ENCODE measurements at regions of chr9 and their contacts with region 1.

Region 1: DNA sequence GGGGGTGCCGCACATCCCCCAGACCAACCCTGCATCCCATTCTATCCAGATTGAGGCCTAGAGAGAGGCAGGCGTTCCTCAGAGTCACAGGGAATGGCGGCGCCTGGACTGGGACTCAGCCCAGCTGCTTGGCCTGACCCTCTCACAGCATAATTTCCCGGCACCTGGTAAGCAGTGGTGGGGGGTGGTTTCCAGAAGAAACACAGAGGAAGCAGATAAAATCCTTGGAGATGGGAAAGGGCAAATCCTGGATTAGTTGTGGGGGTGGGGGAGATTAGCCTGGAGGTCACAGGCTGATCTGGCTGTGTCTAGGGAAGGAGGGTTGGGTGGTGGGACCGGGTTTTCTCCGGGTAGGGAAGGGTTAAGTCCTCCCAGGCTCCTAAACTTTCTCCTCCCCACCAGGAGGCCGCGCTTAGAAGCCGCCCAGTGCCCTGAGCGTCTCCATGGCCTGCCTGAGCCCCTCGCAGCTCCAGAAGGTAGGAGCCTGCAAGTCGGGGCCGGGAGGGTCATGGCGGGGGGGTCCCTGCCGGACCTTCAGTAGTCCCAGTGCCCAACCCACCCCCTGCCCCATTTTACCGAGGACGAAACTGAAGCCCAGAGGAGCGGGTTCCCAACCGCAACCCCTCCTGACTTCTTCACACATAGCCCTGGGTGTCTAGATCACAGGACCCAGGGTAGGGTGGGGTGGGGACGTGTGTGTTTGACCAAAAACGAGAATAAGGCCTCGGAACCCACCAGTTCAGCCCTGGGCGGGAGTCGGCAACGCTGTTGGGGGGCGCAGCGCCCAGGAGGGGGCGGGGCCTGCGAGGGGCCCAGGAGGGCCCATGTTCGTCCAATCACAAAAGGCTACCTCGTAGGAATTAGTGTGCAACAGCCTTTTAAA is 1.3 kb downstream of the PHYHD1 start:
- DNase-seq: peak; percentile 72 to 79
- H3K4me3 ChIP-seq: peak overlapping the region; percentile 52 to 97
- H3K27ac ChIP-seq: peak overlapping the region; percentile 91 to 95
- H3K4me1 ChIP-seq: peaks cover 7 to 12% of the 10 kb centered on the region in 2 donors
- H3K27me3 ChIP-seq: no peaks in the 10 kb centered on the region
- CTCF ChIP-seq: peak in 2 of 4 experiments; percentile 6 to 25
- POLR2A ChIP-seq: peak in 1 of 2 donors; percentile 18

Region 2: DNA sequence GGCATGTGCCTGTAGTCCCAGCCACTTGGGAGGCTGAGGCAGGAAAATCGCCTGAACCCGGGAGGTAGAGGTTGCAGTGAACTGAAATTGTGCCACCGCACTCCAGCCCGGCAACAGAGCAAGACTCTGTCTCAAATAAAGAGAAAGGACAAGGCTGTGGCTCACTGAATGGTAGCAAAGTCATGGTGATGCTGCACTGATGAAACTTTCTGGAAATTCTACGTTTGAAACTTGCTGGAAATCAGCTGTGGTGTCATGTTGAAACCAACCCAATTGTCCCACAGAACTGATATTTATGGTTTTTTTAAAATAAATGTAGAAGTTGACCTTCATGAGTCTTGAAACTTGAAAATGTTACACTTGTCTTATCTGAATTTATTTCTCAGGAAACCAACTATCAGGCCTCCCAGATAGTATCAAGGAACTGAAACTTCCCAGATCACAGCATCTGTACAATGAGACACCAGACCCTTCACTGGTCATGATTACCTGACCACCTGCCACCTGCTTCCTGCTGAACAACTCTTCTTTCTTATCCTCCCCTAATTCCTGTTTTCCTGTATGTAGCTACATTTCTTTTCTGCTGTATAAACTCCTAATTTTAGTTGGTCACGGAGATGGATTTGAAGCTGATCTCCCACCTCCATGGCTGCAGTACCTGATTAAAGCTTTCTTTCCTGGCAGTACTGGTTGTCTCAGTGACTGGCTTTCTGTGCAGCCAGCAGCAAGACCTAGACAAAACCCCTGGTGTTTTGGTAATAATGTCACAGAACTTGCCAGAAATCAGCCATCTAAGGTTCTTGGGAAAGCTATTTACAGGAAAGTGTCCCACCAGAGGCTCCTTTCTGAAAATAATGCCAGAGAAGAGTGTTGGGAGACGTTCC is 140.7 kb before region 1 on chr9:
- intact Hi-C with region 1: no loop called
- DNase-seq: no peak
- H3K4me3 ChIP-seq: no peak overlapping the region
- H3K27ac ChIP-seq: no peak overlapping the region
- H3K4me1 ChIP-seq: no peaks in the 10 kb centered on the region
- H3K27me3 ChIP-seq: no peaks in the 10 kb centered on the region
- CTCF ChIP-seq: no peak
- POLR2A ChIP-seq: no peak

Region 3: DNA sequence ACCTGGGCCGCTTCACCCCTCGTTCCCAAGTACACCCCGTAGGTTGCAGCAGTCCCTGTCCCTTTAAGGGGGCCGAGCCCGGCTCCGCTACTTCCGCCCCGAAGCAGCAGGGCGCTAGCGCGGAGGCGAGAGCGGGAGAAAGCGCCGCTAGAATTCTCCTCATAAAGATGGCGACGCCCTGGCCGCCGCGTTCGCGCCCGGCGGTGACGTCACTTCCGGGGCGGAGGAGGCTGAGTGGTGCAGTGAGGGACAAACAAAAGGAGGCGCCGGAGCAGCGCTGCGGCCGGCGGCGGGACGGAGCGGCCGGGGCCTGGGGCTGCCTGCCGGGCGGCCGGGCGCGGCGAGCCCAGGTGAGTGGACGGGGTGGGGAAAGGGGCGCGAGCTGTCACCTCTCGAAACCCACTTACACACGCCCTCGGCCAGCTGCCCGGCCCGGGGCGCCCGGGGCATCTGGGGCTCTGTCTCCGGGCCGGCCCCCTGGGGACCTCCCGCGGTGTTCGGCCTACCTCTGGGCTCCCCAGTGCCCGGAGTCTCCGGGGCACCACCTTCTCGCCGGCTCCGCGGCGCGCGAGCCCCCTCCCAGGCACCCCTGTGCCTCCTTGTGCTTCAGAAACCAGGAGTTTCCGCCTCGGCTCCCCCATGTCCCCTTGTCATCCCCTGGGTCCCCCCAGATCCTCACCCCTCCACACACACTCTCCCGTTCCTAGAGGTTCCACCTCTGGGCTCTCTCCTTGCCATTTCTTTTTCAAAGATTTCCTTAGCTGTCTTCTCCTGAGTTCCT is 40.0 kb before region 1 on chr9 and contains the starts of genes KYAT1 and LRRC8A:
- intact Hi-C with region 1: loop called (anchors 5 kb)
- DNase-seq: peak; percentile 96 to 98
- H3K4me3 ChIP-seq: peak within 1 kb of the TSS; percentile 73 to 83
- H3K27ac ChIP-seq: peak within 1 kb of the TSS; percentile 96 to 98
- H3K4me1 ChIP-seq: peaks cover 4 to 27% of the 10 kb centered on the region in 2 donors
- H3K27me3 ChIP-seq: no peaks in the 10 kb centered on the region
- CTCF ChIP-seq: peak in 3 of 4 experiments; percentile 14 to 40 (median 33)
- POLR2A ChIP-seq: peak; percentile 78 to 87
- total RNA-seq, gene KYAT1: 1.5 to 11.0 (median 3.4) TPM
- total RNA-seq, gene LRRC8A: 23.5 to 58.7 (median 30.8) TPM

Region 4: GRCh38 chr9:129006328-129007034 is 84.4 kb after region 1 on chr9:
- intact Hi-C with region 1: no loop called
- DNase-seq: peak; percentile 58 to 61
- H3K4me3 ChIP-seq: no peak overlapping the region
- H3K27ac ChIP-seq: peak overlapping the region in 1 of 2 donors; percentile 38
- H3K4me1 ChIP-seq: no peaks in the 10 kb centered on the region
- H3K27me3 ChIP-seq: no peaks in the 10 kb centered on the region
- CTCF ChIP-seq: peak; percentile 60 to 76 (median 69)
- POLR2A ChIP-seq: no peak

Region 5: GRCh38 chr9:129394061-129394885 is 472.2 kb after region 1 on chr9:
- intact Hi-C with region 1: no loop called
- DNase-seq: peak in 1 of 2 donors; percentile 20
- H3K4me3 ChIP-seq: no peak overlapping the region
- H3K27ac ChIP-seq: no peak overlapping the region
- H3K4me1 ChIP-seq: peaks cover 0 to 5% of the 10 kb centered on the region in 2 donors
- H3K27me3 ChIP-seq: no peaks in the 10 kb centered on the region
- CTCF ChIP-seq: no peak
- POLR2A ChIP-seq: no peak